Right ventricle myocardium superior (tissue), 1 donor: ENCODE measurements at regions of chr14 and their contacts with region 1.

Region 1: GRCh38 chr14:74109369-74109768 is 24.6 kb downstream of the LIN52 start:
- DNase-seq: no peak
- ATAC-seq: no peak

Region 2: GRCh38 chr14:74176400-74176793 is 67.0 kb after region 1 on chr14:
- intact Hi-C with region 1: no loop called
- DNase-seq: no peak
- ATAC-seq: no peak

Region 3: DNA sequence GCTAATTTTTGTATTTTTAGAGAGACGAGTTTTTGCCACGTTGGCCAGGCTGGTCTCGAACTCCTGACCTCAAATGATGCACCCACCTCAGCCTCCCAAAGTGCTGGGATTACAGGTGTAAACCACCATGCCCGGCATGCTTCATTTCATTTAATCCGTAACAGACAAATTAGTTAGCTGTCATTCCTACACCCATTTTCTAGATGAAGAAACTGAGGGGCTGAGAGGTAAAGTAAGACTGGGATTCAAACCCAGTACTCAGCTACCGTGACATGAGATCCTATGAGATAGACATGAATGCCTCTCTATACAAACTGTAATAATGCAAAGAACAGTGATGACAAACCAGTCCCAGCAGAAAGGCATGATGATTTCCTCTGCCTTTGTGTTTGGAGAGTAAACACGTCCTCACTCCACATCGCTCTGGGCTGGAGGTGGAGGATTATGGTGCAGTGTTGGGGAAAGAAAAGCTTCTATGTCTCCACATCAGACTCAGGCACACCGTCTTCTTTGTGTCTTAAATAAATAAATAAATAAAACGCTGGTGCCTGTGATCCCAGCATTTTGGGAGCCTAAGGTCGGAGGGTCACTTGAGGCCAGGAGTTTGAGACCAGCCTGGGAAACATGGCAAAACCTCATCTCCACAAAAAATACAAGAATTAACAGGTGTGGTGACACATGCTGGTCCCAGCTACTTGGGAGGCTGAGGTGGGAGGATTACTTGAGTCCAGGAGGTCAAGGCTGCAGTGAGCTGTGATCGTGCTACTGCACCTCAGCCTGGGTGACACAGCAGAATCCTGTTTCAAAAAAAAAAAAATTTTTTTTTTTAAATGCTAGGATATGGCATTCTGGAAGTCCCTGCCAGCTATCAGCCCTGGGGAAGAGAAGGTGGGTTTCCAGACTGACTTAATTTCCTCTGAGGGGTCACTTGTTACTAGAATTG is 140.3 kb after region 1 on chr14:
- intact Hi-C with region 1: loop called (anchors 2 kb)
- DNase-seq: no peak
- ATAC-seq: no peak